ENCODE measurements at regions of chr6 and their contacts with region 1.

Region 1: GRCh38 chr6:119349323-119350042 is at the start of gene MAN1A1:
- DNase-seq: peak; percentile 62 to 69
- ATAC-seq: peak; percentile 74 to 77
- H3K4me3 ChIP-seq: peak within 1 kb of the TSS; percentile 72 to 75 (median 72)
- H3K27ac ChIP-seq: peak within 1 kb of the TSS; percentile 83 to 89 (median 86)
- H3K4me1 ChIP-seq: peaks cover 0 to 3% of the 10 kb centered on the region in 2 donors
- H3K27me3 ChIP-seq: peaks cover 2 to 25% (median 14%) of the 10 kb centered on the region in 3 donors
- CTCF ChIP-seq: no peak
- POLR2A ChIP-seq: peak; percentile 66 to 90
- total RNA-seq, gene MAN1A1: 19.0 to 34.8 (median 21.1) TPM

Region 2: GRCh38 chr6:119147101-119148053 is 202.1 kb before region 1 on chr6:
- in situ Hi-C with region 1: no loop called
- intact Hi-C with region 1: loop called (anchors 10 kb)
- DNase-seq: peak; percentile 16 to 43
- ATAC-seq: peak; percentile 89 to 91
- H3K4me3 ChIP-seq: no peak overlapping the region
- H3K27ac ChIP-seq: peak overlapping the region; percentile 29 to 65 (median 52)
- H3K4me1 ChIP-seq: peaks cover 11 to 18% of the 10 kb centered on the region in 2 donors
- H3K27me3 ChIP-seq: no peaks in the 10 kb centered on the region
- CTCF ChIP-seq: no peak
- POLR2A ChIP-seq: no peak

Region 3: DNA sequence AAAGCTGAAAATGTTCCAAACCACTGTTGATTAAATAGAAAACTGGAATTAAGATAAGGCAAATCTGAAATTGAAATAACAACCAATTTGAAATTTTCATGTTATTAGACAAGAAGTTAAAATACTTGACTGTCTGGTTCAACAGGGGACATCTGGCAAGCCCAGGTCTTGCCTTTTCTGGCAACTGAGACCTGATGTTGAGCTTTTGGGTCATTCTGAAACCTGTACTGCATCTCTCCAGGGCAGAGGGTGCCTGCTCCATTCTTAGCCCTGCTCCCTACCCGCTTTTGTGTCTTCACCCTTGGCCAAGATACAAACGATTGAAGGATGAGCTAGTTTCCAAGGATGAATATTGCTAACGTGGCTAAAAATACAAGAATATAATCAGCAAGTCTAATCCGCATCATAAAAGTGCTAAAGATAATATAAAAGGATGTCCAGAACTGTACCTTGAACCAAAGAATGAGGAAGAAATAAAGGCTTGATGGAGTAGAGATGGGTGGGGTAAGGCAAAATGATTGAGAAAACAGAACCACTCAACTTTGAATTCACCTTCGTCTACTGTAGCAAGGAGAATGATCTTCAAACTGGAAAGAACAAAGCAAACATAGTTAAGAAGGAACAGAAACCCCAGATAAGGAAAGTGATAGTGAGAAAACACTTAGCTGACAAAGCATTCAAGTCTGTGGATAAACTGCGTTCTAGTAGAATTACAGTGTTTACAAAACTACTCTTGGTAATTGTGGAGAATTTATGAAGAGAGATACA is 109.9 kb after region 1 on chr6:
- in situ Hi-C with region 1: loop called in 1 of 4 experiments (anchors 10 kb)
- intact Hi-C with region 1: no loop called
- DNase-seq: no peak
- ATAC-seq: no peak
- H3K4me3 ChIP-seq: no peak overlapping the region
- H3K27ac ChIP-seq: no peak overlapping the region
- H3K4me1 ChIP-seq: no peaks in the 10 kb centered on the region
- H3K27me3 ChIP-seq: no peaks in the 10 kb centered on the region
- CTCF ChIP-seq: no peak
- POLR2A ChIP-seq: no peak